Left cardiac atrium (tissue), 4 donors: ENCODE measurements at regions of chr1 and their contacts with region 1.

Region 1: GRCh38 chr1:94351485-94351884 is 66.7 kb upstream of the ABCD3 start:
- DNase-seq: no peak
- ATAC-seq: no peak

Region 2: DNA sequence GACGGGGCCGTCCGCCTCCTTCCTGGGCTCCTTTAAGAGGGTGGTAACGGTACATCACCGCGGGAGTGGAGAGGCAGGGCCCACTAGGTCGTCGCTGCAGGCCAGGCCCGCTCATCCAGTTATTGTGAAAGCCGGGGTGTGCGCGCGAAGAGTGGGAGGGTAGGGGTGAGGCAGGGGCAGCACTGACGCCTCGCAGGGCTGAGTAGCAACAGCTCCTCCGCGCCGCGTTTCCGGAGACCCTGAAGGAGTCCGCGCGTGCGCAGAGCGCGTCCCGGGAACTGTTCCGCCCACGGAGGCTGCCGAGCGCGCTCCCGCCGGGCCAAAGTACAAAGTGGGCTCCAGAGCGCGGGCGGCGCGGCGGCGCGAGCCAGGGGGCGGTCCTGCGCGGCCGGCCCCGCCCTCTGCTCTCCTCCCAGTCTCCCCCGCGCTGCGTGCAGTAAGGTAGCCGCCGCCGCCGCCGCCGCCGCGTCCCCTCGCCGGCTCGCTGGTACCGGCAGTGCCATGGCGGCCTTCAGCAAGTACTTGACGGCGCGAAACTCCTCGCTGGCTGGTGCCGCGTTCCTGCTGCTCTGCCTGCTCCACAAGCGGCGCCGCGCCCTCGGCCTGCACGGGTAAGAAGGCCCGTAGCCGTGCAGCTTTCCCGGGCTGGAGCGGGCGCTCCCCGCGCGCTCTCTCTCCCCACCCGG is 66.6 kb after region 1 on chr1 and contains the start of gene ABCD3:
- intact Hi-C with region 1: loop called in 1 of 2 experiments (anchors 5 kb)
- DNase-seq: peak; percentile 98
- ATAC-seq: peak; percentile 98 to 99
- total RNA-seq, gene ABCD3: 53.3 to 105 TPM